ENCODE measurements at regions of chr9 and their contacts with region 1.

Region 1: GRCh38 chr9:121213136-121213806 is 11.6 kb upstream of the RAB14 start:
- DNase-seq: peak; percentile 86 to 95 (median 92)
- H3K4me3 ChIP-seq: no peak overlapping the region
- H3K27ac ChIP-seq: no peak overlapping the region
- H3K4me1 ChIP-seq: no peaks in the 10 kb centered on the region
- H3K27me3 ChIP-seq: no peaks in the 10 kb centered on the region
- CTCF ChIP-seq: peak; percentile 81 to 91 (median 89)
- EP300 ChIP-seq: no peak
- POLR2A ChIP-seq: no peak

Region 2: GRCh38 chr9:121267689-121268597 is 54.7 kb after region 1 on chr9 and contains the start of gene GSN:
- intact Hi-C with region 1: loop called in 3 of 4 experiments (anchors 2 to 10 kb)
- DNase-seq: peak; percentile 85 to 92 (median 89)
- H3K4me3 ChIP-seq: peak within 1 kb of the TSS; percentile 74
- H3K27ac ChIP-seq: peak within 1 kb of the TSS; percentile 57 to 59
- H3K4me1 ChIP-seq: peaks cover 28% of the 10 kb centered on the region
- H3K27me3 ChIP-seq: no peaks in the 10 kb centered on the region
- CTCF ChIP-seq: peak in 1 of 3 donors; percentile 16
- EP300 ChIP-seq: no peak
- POLR2A ChIP-seq: peak; percentile 43
- total RNA-seq, gene GSN: 188 to 706 (median 295) TPM

Region 3: GRCh38 chr9:121321016-121321503 is 107.8 kb after region 1 on chr9:
- intact Hi-C with region 1: loop called (anchors 5 to 10 kb)
- DNase-seq: peak in 1 of 5 donors; percentile 23
- H3K4me3 ChIP-seq: no peak overlapping the region
- H3K27ac ChIP-seq: no peak overlapping the region
- H3K4me1 ChIP-seq: peaks cover 12% of the 10 kb centered on the region
- H3K27me3 ChIP-seq: no peaks in the 10 kb centered on the region
- CTCF ChIP-seq: no peak
- EP300 ChIP-seq: no peak
- POLR2A ChIP-seq: no peak

Region 4: DNA sequence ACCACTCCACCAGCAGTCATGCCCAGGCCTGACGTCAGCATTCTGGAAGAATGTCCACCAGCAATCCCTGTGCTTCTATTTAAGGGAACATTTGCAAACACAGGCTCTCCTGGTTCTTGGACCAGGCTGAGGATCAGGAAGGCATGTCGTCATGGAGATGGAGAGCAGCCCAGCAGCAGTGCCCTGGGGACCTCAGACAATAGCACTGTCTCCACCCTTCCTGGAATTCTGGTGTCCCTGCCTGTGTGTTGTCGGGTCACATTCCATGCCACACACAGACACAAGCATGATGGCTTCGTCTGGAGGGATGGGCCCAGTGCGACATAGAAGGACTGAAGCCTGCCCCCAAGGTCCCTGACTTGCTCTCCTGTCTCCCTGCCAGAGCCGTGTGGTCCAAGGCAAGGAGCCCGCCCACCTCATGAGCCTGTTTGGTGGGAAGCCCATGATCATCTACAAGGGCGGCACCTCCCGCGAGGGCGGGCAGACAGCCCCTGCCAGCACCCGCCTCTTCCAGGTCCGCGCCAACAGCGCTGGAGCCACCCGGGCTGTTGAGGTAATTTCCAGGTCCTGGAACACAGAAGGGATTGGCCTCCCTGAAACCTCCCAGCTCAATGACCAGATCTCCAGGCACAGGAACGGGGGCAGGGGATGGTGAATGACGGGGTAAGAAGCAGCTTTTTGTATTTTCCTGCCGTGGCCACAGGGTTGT is 113.0 kb after region 1 on chr9:
- intact Hi-C with region 1: loop called in 1 of 4 experiments (anchors 10 kb)
- DNase-seq: peak; percentile 32 to 77 (median 56)
- H3K4me3 ChIP-seq: no peak overlapping the region
- H3K27ac ChIP-seq: peak overlapping the region; percentile 41 to 74
- H3K4me1 ChIP-seq: peaks cover 5% of the 10 kb centered on the region
- H3K27me3 ChIP-seq: no peaks in the 10 kb centered on the region
- CTCF ChIP-seq: no peak
- EP300 ChIP-seq: peak; percentile 85
- POLR2A ChIP-seq: no peak

Region 5: GRCh38 chr9:121336665-121337064 is 123.4 kb after region 1 on chr9:
- intact Hi-C with region 1: no loop called
- DNase-seq: no peak
- H3K4me3 ChIP-seq: no peak overlapping the region
- H3K27ac ChIP-seq: no peak overlapping the region
- H3K4me1 ChIP-seq: peaks cover 17% of the 10 kb centered on the region
- H3K27me3 ChIP-seq: no peaks in the 10 kb centered on the region
- CTCF ChIP-seq: no peak
- EP300 ChIP-seq: no peak
- POLR2A ChIP-seq: no peak

Region 6: DNA sequence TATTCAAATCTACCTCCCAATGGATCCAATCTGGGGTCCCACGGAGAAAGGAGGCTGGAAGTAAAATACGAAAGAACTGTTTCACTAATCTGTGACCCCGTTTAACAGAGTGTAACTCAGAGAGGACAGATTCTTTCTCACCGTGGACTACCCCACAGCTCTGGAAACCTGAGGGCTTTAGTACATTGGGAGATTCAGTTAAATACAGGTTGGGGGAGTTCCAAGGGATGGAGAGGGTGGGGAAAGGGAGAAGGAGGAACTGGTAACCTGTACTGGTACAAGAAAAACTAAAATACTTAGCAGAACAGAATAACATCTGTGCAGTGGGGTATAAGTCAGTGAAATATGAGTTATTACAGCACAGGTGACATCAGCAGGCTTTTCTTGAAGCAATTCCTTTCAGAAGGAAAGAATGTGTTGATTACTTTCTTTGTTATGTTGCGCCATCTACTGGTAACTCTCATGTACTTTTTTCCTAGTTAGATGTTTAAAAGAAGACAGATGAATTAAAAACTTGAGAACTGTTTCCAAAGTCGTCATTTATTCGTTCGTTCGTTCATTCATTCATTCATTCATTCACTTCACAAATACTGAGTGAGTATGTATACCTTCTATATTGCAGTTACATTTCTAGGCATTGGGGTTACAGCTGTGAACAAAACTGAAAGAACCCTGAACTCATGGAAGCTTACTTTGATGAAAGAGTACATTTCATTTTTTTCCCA is 186.8 kb after region 1 on chr9:
- intact Hi-C with region 1: loop called in 3 of 4 experiments (anchors 5 kb)
- DNase-seq: no peak
- H3K4me3 ChIP-seq: no peak overlapping the region
- H3K27ac ChIP-seq: no peak overlapping the region
- H3K4me1 ChIP-seq: no peaks in the 10 kb centered on the region
- H3K27me3 ChIP-seq: no peaks in the 10 kb centered on the region
- CTCF ChIP-seq: peak; percentile 63 to 79 (median 72)
- EP300 ChIP-seq: no peak
- POLR2A ChIP-seq: no peak